ENCODE measurements at regions of chr2 and their contacts with region 1.

Region 1: DNA sequence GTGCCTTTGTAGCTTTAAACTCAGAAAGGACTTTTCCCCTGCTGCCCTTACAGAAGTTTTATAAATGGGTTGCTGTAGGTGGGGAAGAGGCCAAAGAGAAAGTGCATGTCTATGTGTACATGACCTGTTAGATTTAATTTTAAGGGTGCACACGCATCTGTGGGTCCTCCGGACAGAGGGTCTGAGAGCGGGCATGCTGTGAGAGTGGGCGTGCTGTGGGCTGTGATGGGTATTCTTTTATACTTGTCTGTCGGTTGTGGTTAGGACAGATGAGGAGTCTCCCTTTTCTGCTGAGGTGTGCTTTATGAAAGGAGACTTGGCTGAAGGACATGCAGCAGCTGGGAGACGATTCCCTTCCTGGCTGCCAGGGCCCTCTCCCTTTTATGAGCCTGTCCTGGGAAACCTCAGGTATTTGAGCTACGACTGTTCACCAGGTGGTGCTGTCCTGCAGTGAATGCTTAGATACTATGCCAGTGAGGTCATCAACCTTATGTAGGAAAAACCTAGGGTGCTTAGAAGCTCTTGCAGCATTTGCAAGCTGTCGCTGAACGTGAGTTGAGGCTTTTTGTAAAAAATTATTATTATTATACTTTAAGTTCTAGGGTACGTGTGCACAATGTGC is 67.5 kb downstream of the TANC1 start:
- DNase-seq: no peak
- H3K4me3 ChIP-seq: no peak overlapping the region
- H3K27ac ChIP-seq: no peak overlapping the region
- H3K4me1 ChIP-seq: peaks cover 8 to 33% of the 10 kb centered on the region in 2 donors
- H3K27me3 ChIP-seq: no peaks in the 10 kb centered on the region
- CTCF ChIP-seq: peak in 2 of 3 experiments; percentile 14 to 35

Region 2: GRCh38 chr2:159118115-159118858 is 82.4 kb after region 1 on chr2:
- intact Hi-C with region 1: loop called (anchors 1 kb)
- DNase-seq: peak in 1 of 2 donors; percentile 92
- H3K4me3 ChIP-seq: no peak overlapping the region
- H3K27ac ChIP-seq: no peak overlapping the region
- H3K4me1 ChIP-seq: peaks cover 0 to 2% of the 10 kb centered on the region in 2 donors
- H3K27me3 ChIP-seq: no peaks in the 10 kb centered on the region
- CTCF ChIP-seq: peak; percentile 78 to 91 (median 80)

Region 3: DNA sequence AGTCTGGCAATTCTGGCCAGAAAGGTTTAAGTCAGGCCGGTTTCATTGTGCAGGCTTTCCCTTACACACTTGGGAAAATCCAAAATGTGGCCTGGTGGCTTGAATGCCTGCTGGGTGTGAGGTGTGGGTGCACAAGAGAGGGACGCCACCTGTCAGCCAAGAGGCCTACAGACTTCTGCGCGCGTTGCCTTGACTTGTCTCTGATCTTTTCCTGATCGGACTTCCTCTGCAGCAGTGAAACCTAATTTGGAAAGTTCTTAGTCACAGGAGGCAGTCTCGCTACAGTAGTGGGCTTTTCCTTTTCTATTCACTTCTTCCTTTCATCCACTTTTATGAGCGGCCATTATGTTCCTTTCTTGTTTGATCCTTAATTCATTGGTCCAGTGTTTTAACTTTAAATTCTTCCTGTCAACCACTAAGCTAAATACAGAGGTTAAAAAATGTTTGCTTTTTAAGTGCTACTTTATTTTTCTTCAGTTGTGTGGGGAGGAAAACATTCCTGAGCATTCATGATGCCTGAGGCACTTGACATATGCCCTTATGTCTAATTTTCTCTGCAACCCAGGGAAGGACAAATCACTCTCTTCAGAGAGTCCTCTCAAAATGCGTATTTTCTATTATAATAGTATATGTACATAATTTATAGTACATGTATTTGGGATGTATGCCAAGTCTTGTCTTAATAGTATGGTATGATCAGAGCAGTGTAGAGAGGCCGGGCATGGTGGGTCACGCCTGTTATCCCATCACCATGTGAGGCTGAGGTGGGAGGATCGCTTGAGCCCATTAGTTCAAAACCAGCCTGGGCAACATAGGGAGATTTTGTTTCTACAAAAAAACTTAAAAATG is 121.7 kb after region 1 on chr2:
- intact Hi-C with region 1: no loop called
- DNase-seq: no peak
- H3K4me3 ChIP-seq: no peak overlapping the region
- H3K27ac ChIP-seq: no peak overlapping the region
- H3K4me1 ChIP-seq: peaks cover 0 to 8% of the 10 kb centered on the region in 2 donors
- H3K27me3 ChIP-seq: no peaks in the 10 kb centered on the region
- CTCF ChIP-seq: no peak

Measured in ascending aorta (tissue), 2 donors.